ENCODE measurements at regions of chr1 and their contacts with region 1.

Region 1: DNA sequence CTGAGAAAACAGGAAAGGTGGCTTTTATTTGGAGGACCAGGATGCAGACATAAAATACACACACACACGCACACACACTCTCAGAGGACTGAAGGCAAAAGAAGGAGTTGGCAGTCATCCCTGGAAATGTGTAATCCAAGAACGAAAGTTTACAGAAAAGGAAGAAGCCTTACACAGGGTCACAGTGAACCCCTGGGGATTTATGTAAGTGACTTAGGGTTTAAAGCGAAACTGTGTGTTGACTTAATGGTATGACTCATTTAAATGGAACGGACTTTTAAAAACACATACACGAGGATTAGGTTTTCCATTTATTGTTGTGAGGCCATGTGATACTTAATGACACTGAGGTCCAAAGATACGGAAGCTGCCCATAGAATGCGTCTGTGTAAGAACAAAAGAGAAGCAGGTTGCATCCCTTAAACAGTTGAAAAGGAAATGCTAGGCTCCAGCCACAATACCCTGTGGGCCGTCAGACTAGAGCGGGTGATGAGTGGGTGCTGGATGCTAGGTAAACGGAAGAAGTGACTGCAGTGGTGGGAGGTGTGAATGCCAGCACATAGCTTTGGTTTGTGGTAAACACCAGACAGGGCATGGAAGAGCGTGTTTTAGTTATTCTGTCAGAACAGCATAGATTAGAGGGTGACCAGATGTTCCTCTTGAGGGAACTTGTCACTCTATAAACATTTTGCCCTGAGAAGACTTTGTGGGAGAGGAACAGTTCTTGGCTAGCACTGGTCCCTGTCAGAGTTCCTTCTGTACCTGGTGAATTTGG is 21.6 kb upstream of the BCL10 start:
- DNase-seq: peak; percentile 80
- ATAC-seq: peak; percentile 98
- H3K4me3 ChIP-seq: no peak overlapping the region
- H3K27ac ChIP-seq: no peak overlapping the region
- H3K4me1 ChIP-seq: peaks cover 6% of the 10 kb centered on the region
- H3K27me3 ChIP-seq: no peaks in the 10 kb centered on the region; a peak in 1 of 4 replicates
- CTCF ChIP-seq: no peak
- EP300 ChIP-seq: peak in 1 of 2 experiments; percentile 57; a peak in 1 of 4 replicates
- POLR2A ChIP-seq: no peak
- RAD21 ChIP-seq: no peak

Region 2: GRCh38 chr1:85276215-85276977 is 21.6 kb before region 1 on chr1 and contains the start of gene BCL10:
- CTCF ChIA-PET with region 1: interaction called, 13 read pairs
- POLR2A ChIA-PET with region 1: interaction called, 11 read pairs
- RAD21 ChIA-PET with region 1: no interaction called
- SMC1A ChIA-PET with region 1: interaction called, 9 read pairs
- in situ Hi-C with region 1: no loop called
- intact Hi-C with region 1: loop called (anchors 2 kb)
- DNase-seq: peak; percentile 97
- ATAC-seq: peak; percentile 97
- H3K4me3 ChIP-seq: peak within 1 kb of the TSS; percentile 87
- H3K27ac ChIP-seq: peak within 1 kb of the TSS; percentile 94
- H3K4me1 ChIP-seq: peaks cover 4% of the 10 kb centered on the region
- H3K27me3 ChIP-seq: no peaks in the 10 kb centered on the region
- CTCF ChIP-seq: no peak
- EP300 ChIP-seq: no peak
- POLR2A ChIP-seq: peak; percentile 83
- RAD21 ChIP-seq: no peak
- polyA plus RNA-seq, gene BCL10: 16.7 to 19.0 TPM